Dorsolateral prefrontal cortex (tissue), 120 donors: ENCODE measurements at regions of chr16 and their contacts with region 1.

Region 1: DNA sequence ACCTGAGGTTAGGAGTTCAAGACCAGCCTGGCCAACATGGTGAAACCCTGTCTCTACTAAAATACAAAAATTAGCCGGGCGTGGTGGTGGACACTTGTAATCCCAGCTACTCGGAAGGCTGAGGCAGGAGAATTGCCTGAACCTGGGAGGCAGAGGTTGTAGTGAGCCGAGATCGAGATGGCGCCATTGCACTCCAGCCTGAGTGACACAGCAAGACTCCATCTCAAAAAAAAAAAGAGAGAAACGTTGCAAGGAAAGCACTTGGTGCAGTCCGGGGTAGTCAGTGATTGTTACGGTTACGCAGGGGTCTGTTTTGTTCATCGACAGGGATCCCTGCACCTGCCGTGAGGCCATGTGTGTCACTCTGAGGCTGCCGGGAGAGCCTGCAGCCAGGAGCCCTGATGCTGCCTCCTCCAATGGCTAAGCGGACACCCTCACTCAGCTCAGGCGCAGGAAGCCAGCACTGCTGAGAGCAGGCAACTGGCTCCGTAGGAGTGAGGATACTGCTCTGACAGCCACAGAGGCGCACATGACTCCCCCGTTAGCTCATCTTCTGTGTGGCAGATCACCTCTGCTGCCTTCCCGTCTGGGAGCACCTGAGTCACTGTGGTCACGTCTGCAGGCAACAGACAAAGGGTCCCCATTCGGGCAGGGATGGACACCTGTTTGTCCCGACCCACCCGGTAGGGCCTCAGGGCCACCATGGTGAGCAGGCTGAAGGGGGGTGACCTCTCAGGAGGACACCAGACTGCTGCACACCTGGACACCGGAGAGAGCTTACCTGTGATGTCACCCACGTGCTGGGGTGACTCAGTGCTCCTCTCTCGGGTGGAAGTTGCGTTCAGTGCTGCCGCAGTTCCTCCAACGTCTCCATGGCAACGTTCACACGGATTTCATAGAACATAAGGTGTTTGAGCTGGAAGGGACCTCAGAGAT is 5.2 kb upstream of the RAB26 start:
- DNase-seq: peak in 9 of 10 donors; percentile 58 to 89 (median 77)
- H3K4me3 ChIP-seq: peak overlapping the region in 5 of 59 donors; percentile 1 to 12 (median 10)
- H3K27ac ChIP-seq: peak overlapping the region in 57 of 59 donors; percentile 27 to 96 (median 84)
- H3K27me3 ChIP-seq: no peaks in the 10 kb centered on the region
- CTCF ChIP-seq: no peak

Region 2: GRCh38 chr16:1920727-1921171 is 222.5 kb before region 1 on chr16:
- intact Hi-C with region 1: no loop called
- DNase-seq: no peak
- H3K4me3 ChIP-seq: no peak overlapping the region
- H3K27ac ChIP-seq: no peak overlapping the region
- H3K27me3 ChIP-seq: peaks cover 0 to 96% (median 76%) of the 10 kb centered on the region in 45 donors
- CTCF ChIP-seq: no peak

Region 3: DNA sequence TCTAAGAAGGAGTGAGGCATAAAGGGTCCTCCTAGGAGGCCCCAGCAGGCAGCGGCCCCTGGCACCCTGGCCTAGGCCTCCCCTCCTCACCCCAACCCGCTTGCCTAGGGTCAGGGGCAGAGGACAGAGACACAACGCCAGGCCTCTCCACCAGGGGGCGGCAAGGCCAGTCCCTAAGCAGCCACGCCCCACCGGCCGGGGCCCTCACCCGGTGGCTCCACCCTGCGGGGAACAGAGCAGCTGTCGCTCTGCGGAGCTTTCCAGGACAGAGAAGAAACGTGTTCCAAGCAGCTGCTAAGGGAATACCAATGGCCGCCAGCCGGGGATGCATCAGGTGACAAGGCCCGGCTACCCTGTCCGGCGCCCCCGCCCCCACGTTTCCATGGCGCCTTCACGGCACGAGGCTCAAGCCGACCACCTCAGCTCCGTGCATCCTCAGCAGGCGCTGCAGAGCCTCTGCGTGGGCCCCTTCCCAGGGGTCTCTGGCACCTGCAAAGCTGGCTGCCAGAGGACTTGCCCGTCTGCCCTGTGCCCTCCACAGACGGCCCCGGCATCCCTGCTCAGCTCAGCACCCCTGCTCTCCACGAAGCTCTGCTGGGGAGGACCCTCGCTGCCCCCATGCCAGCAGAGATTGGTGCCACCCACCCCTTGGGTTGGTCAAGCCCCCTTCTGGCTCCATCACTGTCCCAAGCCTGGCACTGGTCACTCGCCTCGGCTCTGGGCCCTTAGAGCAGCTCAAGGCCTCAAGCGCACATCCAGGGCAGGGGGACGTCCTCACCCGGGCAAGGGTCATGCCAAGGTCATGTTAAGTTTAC is 139.2 kb before region 1 on chr16:
- intact Hi-C with region 1: loop called in 1 of 2 experiments (anchors 5 kb)
- DNase-seq: peak; percentile 68 to 86 (median 78)
- H3K4me3 ChIP-seq: peak overlapping the region in 33 of 59 donors; percentile 2 to 52 (median 22)
- H3K27ac ChIP-seq: peak overlapping the region in 43 of 59 donors; percentile 6 to 78 (median 51)
- H3K27me3 ChIP-seq: no peaks in the 10 kb centered on the region
- CTCF ChIP-seq: peak; percentile 43 to 95 (median 84)

Region 4: DNA sequence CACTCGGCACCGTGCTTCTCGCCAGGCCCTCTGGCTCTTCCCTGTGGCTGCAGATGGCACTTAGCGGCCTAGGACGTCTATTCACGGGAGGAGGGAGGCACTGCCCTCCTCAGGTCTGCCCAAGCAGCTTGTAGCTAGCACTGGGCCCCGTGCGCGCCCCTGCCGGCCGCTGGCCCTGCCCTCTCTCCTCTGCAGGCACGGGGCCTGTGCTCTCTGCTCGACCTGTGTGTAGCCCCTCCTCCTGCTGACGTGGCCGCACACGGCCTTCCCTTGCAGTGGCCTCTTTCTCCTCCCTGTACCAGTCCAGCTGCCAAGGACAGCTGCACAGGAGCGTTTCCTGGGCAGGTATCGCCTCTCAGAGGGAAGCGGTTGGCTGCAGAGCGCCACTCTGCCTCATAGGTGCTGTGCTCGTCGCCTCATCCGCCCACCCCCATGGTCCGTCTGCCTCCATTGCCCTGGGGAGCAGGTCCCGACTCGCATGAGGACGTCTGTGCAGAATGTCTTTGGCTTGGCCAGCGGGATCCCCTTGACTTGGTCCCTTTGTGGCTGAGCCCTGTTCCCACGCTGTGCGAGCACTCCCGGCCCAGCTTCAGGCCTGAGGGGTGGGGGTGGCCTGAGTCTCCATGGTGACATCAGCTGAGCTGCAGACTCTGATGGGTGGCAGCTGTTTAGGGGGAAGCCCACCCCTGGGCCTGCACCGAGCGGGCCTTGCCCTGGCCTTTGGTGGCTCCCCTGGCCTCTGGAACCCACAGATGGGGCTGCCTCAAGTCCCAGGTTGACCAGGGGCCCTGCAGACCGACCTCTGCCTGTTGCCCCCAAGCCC is 60.8 kb before region 1 on chr16:
- intact Hi-C with region 1: no loop called
- DNase-seq: peak in 1 of 10 donors; percentile 68
- H3K4me3 ChIP-seq: no peak overlapping the region
- H3K27ac ChIP-seq: peak overlapping the region in 25 of 59 donors; percentile 6 to 92 (median 36)
- H3K27me3 ChIP-seq: no peaks in the 10 kb centered on the region
- CTCF ChIP-seq: no peak

Region 5: GRCh38 chr16:2121853-2122252 is 21.4 kb before region 1 on chr16:
- intact Hi-C with region 1: loop called (anchors 2 kb)
- DNase-seq: peak in 4 of 10 donors; percentile 47 to 68 (median 54)
- H3K4me3 ChIP-seq: peak overlapping the region in 42 of 59 donors; percentile 3 to 52 (median 28)
- H3K27ac ChIP-seq: peak overlapping the region in 56 of 59 donors; percentile 10 to 98 (median 93)
- H3K27me3 ChIP-seq: no peaks in the 10 kb centered on the region
- CTCF ChIP-seq: no peak

Region 6: GRCh38 chr16:2180962-2181923 is 38.0 kb after region 1 on chr16:
- intact Hi-C with region 1: no loop called
- DNase-seq: no peak
- H3K4me3 ChIP-seq: no peak overlapping the region
- H3K27ac ChIP-seq: no peak overlapping the region
- H3K27me3 ChIP-seq: no peaks in the 10 kb centered on the region
- CTCF ChIP-seq: no peak

Region 7: DNA sequence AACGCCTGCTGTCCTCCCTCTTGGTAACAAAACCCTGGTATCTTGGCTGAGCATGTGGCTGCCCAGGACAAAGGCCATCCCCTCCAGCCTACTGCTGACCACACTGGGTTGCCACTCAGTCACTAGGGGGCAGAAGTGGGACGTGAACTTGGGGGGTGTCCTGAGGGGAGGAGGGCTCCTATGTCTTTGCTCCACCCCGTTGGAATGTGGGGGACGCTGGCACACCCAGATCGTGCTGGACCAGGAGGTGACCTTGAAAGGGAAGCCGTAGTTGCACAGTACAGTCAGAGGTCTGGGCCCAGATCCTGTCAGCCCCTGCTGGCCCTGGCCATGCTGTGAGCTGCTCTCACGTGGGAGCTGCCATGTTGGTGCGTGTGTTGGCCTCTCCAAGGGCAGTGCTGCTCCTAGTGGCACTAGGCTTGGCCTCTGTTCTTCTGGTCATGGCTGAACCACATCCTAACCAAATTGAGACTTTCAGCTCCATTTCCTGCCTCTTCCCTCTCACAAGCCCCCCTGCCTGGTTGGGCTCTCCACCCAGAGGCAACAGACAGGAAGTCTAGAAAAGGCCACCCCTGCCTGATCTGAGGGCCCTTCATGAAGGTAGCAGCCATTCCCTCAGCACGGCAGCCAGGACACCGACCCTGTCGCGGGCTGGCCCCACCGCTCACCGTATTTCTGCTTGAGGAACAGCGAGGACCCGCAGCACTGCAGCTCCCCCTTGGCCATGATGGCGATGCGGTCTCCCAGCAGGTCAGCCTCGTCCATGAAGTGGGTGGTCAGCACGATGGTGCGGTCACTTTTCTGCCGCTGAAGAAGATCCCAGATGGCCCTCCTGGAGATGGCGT is 153.7 kb after region 1 on chr16:
- intact Hi-C with region 1: no loop called
- DNase-seq: no peak
- H3K4me3 ChIP-seq: no peak overlapping the region
- H3K27ac ChIP-seq: peak overlapping the region in 4 of 59 donors; percentile 27 to 49 (median 38)
- H3K27me3 ChIP-seq: no peaks in the 10 kb centered on the region
- CTCF ChIP-seq: peak in 46 of 56 donors; percentile 11 to 53 (median 29)